ENCODE measurements at regions of chr3 and their contacts with region 1.

Region 1: GRCh38 chr3:133661454-133662277 is at the start of gene TOPBP1:
- DNase-seq: peak; percentile 76 to 93
- ATAC-seq: peak; percentile 81 to 93 (median 89)
- H3K4me3 ChIP-seq: peak within 1 kb of the TSS; percentile 79
- H3K4me3 Mint-ChIP-seq: peak within 1 kb of the TSS; percentile 97
- H3K27ac ChIP-seq: peak within 1 kb of the TSS; percentile 74
- H3K27ac Mint-ChIP-seq: peak within 1 kb of the TSS; percentile 95 to 97
- H3K4me1 ChIP-seq: peaks cover 15% of the 10 kb centered on the region
- H3K4me1 Mint-ChIP-seq: peaks cover 40 to 43% of the 10 kb centered on the region in 2 donors
- H3K27me3 ChIP-seq: no peaks in the 10 kb centered on the region
- H3K27me3 Mint-ChIP-seq: no peaks in the 10 kb centered on the region
- CTCF ChIP-seq: no peak
- total RNA-seq, gene TOPBP1: 48.1 to 52.9 (median 50.9) TPM

Region 2: GRCh38 chr3:133578548-133579191 is 83.0 kb before region 1 on chr3:
- intact Hi-C with region 1: loop called (anchors 1 kb)
- DNase-seq: peak in 1 of 2 donors; percentile 41
- ATAC-seq: no peak
- H3K4me3 ChIP-seq: no peak overlapping the region
- H3K4me3 Mint-ChIP-seq: peak overlapping the region; percentile 71
- H3K27ac ChIP-seq: no peak overlapping the region
- H3K27ac Mint-ChIP-seq: peak overlapping the region; percentile 99
- H3K4me1 ChIP-seq: peaks cover 24% of the 10 kb centered on the region
- H3K4me1 Mint-ChIP-seq: peaks cover 61 to 65% of the 10 kb centered on the region in 2 donors
- H3K27me3 ChIP-seq: no peaks in the 10 kb centered on the region
- H3K27me3 Mint-ChIP-seq: no peaks in the 10 kb centered on the region
- CTCF ChIP-seq: peak; percentile 34

Region 3: GRCh38 chr3:133805527-133806475 is 144.1 kb after region 1 on chr3 and contains the start of gene SRPRB:
- intact Hi-C with region 1: loop called (anchors 1 kb)
- DNase-seq: peak; percentile 87 to 98
- ATAC-seq: peak; percentile 95 to 98 (median 97)
- H3K4me3 ChIP-seq: peak within 1 kb of the TSS; percentile 89
- H3K4me3 Mint-ChIP-seq: peak within 1 kb of the TSS; percentile 95
- H3K27ac ChIP-seq: peak within 1 kb of the TSS; percentile 76
- H3K27ac Mint-ChIP-seq: peak within 1 kb of the TSS; percentile 90 to 96
- H3K4me1 ChIP-seq: peaks cover 9% of the 10 kb centered on the region
- H3K4me1 Mint-ChIP-seq: peaks cover 15 to 17% of the 10 kb centered on the region in 2 donors
- H3K27me3 ChIP-seq: no peaks in the 10 kb centered on the region
- H3K27me3 Mint-ChIP-seq: peaks cover 18 to 25% of the 10 kb centered on the region in 2 donors
- CTCF ChIP-seq: no peak
- total RNA-seq, gene SRPRB: 19.8 to 26.4 (median 22.4) TPM

Region 4: DNA sequence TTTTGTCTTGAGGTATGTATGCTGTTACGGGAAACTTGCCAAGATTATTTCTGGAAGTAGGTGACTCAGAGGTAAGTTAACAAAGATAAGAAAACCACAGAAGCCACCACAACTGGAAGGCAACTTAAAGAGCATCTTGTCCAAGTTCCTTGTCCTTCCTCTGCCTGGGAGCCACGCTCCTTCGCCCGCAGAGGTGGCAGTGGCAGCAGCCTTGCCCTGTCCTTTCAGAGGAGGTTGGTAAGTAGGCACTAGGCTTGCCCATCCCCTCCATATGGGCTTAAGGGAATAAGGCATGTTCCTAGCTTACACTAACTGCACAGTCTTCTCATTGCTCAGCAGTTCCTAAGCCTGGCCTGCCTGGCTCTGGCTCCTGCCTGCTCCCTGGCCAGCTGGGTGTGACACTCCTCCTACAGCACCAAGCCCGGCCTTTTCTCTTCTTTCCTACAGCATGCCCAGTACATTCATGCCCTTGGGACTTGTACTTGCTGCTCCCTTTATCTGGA is 282.0 kb after region 1 on chr3:
- intact Hi-C with region 1: no loop called
- DNase-seq: no peak
- ATAC-seq: no peak
- H3K4me3 ChIP-seq: no peak overlapping the region
- H3K4me3 Mint-ChIP-seq: no peak overlapping the region
- H3K27ac ChIP-seq: no peak overlapping the region
- H3K27ac Mint-ChIP-seq: no peak overlapping the region
- H3K4me1 ChIP-seq: peaks cover 11% of the 10 kb centered on the region
- H3K4me1 Mint-ChIP-seq: peaks cover 7% of the 10 kb centered on the region in 2 donors
- H3K27me3 ChIP-seq: no peaks in the 10 kb centered on the region
- H3K27me3 Mint-ChIP-seq: peaks cover 13% of the 10 kb centered on the region in 2 donors
- CTCF ChIP-seq: no peak